ENCODE measurements at regions of chr9 and their contacts with region 1.

Region 1: GRCh38 chr9:83980395-83981125 is at the start of gene RMI1:
- DNase-seq: peak; percentile 94 to 96
- H3K4me3 ChIP-seq: peak within 1 kb of the TSS; percentile 86
- H3K4me3 Mint-ChIP-seq: peak within 1 kb of the TSS; percentile 95
- H3K27ac Mint-ChIP-seq: peak within 1 kb of the TSS; percentile 100
- H3K4me1 ChIP-seq: peaks cover 16% of the 10 kb centered on the region; the same call in 1 of the 2 replicates
- H3K4me1 Mint-ChIP-seq: peaks cover 3% of the 10 kb centered on the region
- H3K27me3 ChIP-seq: no peaks in the 10 kb centered on the region
- H3K27me3 Mint-ChIP-seq: no peaks in the 10 kb centered on the region
- CTCF ChIP-seq: no peak
- total RNA-seq, gene RMI1: 10.2 and 10.8 TPM in 2 replicates

Region 2: DNA sequence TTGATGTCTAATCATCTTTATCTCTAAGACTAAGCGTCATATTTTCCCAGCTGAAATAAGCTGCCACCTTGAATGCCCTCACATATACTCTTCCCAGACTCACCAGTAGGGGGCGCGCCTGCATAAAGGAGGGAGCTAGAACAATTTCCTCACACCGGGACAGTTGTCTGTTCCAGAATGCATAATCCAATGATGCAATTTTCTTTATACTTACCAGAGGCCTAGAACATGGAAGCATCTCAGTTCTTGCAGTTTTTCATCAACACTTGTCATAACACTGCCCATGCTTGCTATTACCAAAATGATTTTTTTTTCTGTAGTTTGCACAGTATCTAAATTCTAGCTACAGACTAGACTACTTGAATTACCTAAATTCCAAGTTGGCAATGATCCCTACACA is 646.2 kb before region 1 on chr9:
- CTCF ChIA-PET with region 1: no interaction called
- POLR2A ChIA-PET with region 1: no interaction called
- intact Hi-C with region 1: no loop called
- DNase-seq: peak; percentile 58 to 59
- H3K4me3 ChIP-seq: no peak overlapping the region
- H3K4me3 Mint-ChIP-seq: no peak overlapping the region
- H3K27ac Mint-ChIP-seq: no peak overlapping the region
- H3K4me1 ChIP-seq: no peaks in the 10 kb centered on the region
- H3K4me1 Mint-ChIP-seq: no peaks in the 10 kb centered on the region
- H3K27me3 ChIP-seq: no peaks in the 10 kb centered on the region
- H3K27me3 Mint-ChIP-seq: no peaks in the 10 kb centered on the region
- CTCF ChIP-seq: peak; percentile 47 to 54

Region 3: DNA sequence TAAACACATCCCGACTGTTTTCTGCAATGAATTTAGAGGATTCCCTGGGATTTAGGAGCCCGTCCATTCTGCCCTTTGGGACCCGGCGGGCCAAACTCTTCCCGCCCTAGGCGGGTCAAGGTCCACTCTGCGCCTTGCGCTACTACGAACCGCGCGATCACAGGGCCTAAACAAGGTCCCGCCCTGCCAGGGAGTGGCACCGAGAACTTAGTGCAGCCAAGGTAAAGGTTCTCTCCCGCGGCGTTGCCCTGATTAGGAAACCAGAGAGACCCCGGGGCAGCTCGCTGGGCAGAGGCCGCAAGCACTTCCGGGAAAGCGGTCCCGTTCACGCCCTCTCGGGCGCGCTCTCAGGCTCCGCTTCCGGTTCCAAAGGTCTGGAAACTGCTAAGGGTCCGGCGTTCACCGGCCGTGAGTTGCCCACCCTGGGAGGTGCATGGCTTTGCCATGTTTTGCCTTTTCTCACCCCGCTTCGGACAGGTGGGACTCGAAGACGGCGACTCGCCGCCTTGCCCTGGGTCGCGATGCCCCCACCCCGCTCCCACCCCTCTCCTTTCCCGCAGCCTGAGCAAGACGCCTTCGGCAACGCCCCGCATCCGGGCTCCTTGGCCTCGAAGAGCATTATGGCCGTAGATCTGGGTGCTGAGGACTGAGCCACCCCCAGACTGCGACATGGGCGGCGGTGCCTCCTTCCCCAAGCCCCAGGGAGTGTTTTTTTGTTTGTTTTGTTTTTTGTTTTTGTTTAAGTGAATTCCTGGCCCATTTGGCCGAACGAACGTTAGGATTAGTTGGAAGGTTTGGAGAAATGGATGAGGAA is 23.9 kb before region 1 on chr9:
- CTCF ChIA-PET with region 1: no interaction called
- POLR2A ChIA-PET with region 1: interaction called, 4 read pairs
- intact Hi-C with region 1: loop called (anchors 1 kb)
- DNase-seq: peak; percentile 80 to 87
- H3K4me3 ChIP-seq: peak overlapping the region; percentile 70
- H3K4me3 Mint-ChIP-seq: peak overlapping the region; percentile 99
- H3K27ac Mint-ChIP-seq: peak overlapping the region; percentile 98
- H3K4me1 ChIP-seq: no peaks in the 10 kb centered on the region
- H3K4me1 Mint-ChIP-seq: no peaks in the 10 kb centered on the region
- H3K27me3 ChIP-seq: no peaks in the 10 kb centered on the region
- H3K27me3 Mint-ChIP-seq: no peaks in the 10 kb centered on the region
- CTCF ChIP-seq: no peak